ENCODE measurements at regions of chr14 and their contacts with region 1.

Region 1: DNA sequence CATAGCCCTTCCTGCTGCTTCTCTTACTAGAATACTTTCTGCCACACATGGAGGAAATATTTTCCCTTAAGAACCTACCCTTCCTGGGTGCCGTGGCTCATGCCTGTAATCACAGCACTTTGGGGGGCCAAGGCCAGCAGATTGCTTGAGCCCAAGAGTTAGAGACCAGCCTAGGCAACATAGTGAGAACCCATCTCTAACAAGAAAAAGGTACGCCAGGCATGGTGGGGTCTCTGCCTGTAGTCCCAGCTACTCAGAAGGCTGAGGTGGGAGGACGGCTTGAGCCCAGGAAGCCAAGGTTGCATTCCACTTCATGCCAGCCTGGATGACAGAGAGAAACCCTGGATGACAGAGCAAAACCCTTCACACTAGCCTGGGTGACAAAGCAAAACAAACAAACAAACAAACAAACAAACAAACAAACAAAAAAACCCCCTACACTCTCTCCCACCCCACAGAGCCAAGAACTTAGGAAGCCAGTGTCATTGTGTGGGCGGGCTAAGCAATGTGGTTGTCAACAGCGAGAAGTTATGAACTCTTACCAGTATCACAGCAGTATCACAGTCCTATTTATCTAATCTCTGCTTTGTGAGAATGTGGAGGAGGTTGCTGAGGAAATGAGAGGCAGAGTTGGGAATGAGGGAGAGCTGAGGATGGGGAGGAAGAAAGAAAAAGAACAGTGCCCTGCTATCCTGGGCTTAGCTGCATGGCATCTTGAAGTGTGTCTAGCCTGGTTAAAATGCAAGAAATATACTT is 53.8 kb upstream of the CLEC14A start:
- DNase-seq: no peak
- ATAC-seq: peak in 1 of 4 donors; percentile 36
- H3K4me3 ChIP-seq: peak overlapping the region in 1 of 12 donors; percentile 10
- H3K27ac ChIP-seq: peak overlapping the region; percentile 39 to 88 (median 71)
- H3K4me1 ChIP-seq: peaks cover 0 to 25% (median 0%) of the 10 kb centered on the region in 12 donors
- H3K27me3 ChIP-seq: no peaks in the 10 kb centered on the region
- CTCF ChIP-seq: no peak
- POLR2A ChIP-seq: no peak

Region 2: DNA sequence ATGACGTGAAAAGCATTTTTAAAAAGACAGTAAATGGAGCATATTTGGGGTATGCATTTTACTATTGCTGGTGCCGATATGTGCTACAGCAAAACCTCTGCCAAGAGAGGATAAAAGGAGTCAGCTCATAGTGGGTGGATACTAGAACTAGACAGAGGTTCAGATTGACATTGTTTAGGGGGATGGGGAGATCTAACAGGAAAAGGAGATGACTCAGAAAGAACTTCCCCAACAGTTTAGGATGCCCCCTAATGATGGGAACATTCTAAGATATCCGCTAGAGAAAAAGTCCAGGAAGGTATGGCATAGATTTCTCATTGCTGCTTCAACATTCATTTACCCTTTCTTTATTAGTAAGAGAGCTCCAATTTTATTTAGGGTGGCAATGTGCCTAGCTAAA is 56.7 kb after region 1 on chr14:
- intact Hi-C with region 1: loop called in 2 of 10 experiments (anchors 2 to 5 kb)
- DNase-seq: no peak
- ATAC-seq: peak in 2 of 4 donors; percentile 50 to 60
- H3K4me3 ChIP-seq: no peak overlapping the region
- H3K27ac ChIP-seq: peak overlapping the region in 3 of 12 donors; percentile 12 to 70 (median 50)
- H3K4me1 ChIP-seq: peaks cover 0 to 24% (median 4%) of the 10 kb centered on the region in 12 donors
- H3K27me3 ChIP-seq: no peaks in the 10 kb centered on the region
- CTCF ChIP-seq: no peak
- POLR2A ChIP-seq: no peak

Region 3: GRCh38 chr14:38419579-38419978 is 109.9 kb after region 1 on chr14:
- intact Hi-C with region 1: loop called in 1 of 10 experiments (anchors 10 kb)
- DNase-seq: no peak
- ATAC-seq: peak in 3 of 4 donors; percentile 39 to 71 (median 47)
- H3K4me3 ChIP-seq: peak overlapping the region in 4 of 12 donors; percentile 0 to 12 (median 4)
- H3K27ac ChIP-seq: no peak overlapping the region
- H3K4me1 ChIP-seq: peaks cover 0 to 4% (median 0%) of the 10 kb centered on the region in 12 donors
- H3K27me3 ChIP-seq: no peaks in the 10 kb centered on the region
- CTCF ChIP-seq: no peak
- POLR2A ChIP-seq: no peak